ENCODE measurements at regions of chr4 and their contacts with region 1.

Region 1: DNA sequence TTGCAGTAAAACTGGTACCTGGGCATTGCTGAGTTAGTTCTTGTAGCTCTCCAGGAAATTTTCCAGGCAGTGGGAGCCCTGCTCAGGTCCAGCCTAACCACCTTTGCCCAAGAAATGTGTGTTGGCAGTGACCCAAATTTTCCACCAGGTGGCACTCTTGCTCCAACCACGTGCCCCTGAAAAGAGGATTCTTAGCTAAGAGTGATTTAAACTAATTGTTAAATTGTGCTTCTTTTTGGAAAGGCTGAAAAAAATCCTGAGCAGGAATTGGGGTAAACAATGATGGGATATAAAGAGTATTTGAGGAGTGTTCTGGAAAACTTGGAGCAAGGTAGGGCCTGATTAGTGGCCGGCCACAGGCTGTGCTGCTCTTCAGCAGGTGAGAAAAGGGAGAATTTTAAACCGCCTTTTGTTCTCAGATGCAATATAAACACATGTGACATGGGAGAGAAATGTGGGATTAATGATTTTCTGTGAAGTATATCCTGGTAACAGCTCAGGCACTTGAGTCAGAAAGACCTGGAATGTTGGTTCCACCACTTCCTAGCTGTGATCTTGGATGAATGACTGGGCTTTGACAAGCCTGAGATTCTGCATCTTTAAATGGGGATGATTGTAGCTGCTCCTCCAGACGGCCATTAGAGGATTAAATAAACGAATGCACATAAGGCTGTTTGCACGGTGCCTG is 219.6 kb downstream of the PTTG2 start:
- DNase-seq: peak; percentile 61
- CTCF ChIP-seq: peak; percentile 84

Region 2: GRCh38 chr4:38062088-38062893 is 117.5 kb before region 1 on chr4:
- CTCF ChIA-PET with region 1: interaction called, 26 read pairs
- POLR2A ChIA-PET with region 1: no interaction called
- DNase-seq: peak; percentile 69
- CTCF ChIP-seq: peak; percentile 67

Region 3: GRCh38 chr4:38154681-38155608 is 24.9 kb before region 1 on chr4:
- CTCF ChIA-PET with region 1: interaction called, 27 read pairs
- POLR2A ChIA-PET with region 1: no interaction called
- DNase-seq: no peak
- CTCF ChIP-seq: no peak

Region 4: DNA sequence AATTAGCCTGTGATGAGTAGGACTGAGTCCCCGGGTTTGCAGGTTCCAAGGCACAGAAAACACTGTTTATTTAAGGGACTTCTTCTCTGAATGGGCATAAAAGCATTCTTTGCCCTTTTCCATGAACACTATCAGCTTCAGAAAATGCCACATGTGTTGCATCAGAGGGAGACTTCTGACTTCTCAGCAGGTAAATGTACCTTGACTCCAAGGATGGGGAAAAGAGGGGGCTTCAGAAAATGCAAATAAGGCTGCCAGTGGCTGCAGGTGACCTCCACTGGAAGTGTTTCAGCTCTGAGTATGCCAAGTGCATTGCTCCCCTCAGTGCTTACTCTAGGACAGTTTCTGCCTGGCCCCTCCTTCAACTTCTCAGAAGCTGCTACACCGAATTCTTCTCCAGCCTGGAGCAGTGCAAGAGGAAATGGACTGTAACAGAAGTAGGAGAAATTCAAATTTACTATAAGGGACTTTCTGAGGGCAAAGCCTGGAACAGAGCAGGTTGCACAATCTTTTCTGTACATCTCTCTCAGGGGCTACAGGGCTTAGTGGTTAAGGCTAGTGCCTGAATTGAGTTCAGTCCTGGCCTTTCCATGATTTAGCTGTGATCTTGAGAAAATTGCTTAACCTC is 13.5 kb after region 1 on chr4:
- CTCF ChIA-PET with region 1: interaction called, 37 read pairs
- POLR2A ChIA-PET with region 1: no interaction called
- DNase-seq: no peak
- CTCF ChIP-seq: no peak

Region 5: GRCh38 chr4:38319456-38320342 is 139.9 kb after region 1 on chr4:
- CTCF ChIA-PET with region 1: interaction called, 30 read pairs
- POLR2A ChIA-PET with region 1: no interaction called
- DNase-seq: peak; percentile 85
- CTCF ChIP-seq: peak; percentile 98

Region 6: GRCh38 chr4:38730830-38731646 is 551.2 kb after region 1 on chr4:
- CTCF ChIA-PET with region 1: interaction called, 73 read pairs
- POLR2A ChIA-PET with region 1: no interaction called
- DNase-seq: peak; percentile 81
- CTCF ChIP-seq: peak; percentile 87

Region 7: GRCh38 chr4:38782452-38783108 is 602.7 kb after region 1 on chr4 and contains the start of gene TLR10:
- CTCF ChIA-PET with region 1: interaction called, 21 read pairs
- POLR2A ChIA-PET with region 1: interaction called, 9 read pairs
- DNase-seq: peak; percentile 67
- CTCF ChIP-seq: peak; percentile 55